Ovary (tissue), 10 donors: ENCODE measurements at regions of chr2 and their contacts with region 1.

Region 1: DNA sequence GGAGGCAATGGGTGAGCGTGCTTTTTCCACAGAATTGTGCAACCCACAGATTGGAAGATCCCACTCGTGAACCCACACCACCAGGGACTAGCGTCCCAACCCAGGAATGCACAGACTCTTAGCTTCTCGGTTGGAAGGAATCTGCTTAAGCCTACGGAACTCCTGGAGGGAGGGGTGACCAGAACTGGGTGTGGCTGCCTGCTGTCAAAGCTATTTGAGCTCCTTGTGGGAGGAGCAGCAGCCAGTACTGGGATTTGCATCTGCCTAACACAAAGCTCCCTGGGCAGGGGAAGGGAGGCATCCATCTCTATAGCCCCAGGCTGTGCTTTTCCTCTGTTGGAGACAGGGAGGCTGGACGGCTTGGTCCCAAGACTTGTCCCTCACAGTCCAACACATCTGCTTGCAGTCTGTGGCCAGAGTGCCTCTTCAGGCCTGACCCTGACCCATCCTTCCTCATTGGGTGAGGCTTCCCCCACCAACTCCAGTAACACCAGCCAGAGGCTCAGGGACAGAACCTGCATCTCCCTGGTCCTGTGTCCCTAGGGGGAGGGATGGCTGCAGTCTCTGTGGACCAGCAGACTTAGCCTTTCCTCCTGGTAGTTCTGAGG is 27.9 kb downstream of the HNMT start:
- DNase-seq: no peak
- H3K4me3 ChIP-seq: no peak overlapping the region
- H3K27ac ChIP-seq: no peak overlapping the region
- H3K4me1 ChIP-seq: no peaks in the 10 kb centered on the region
- H3K27me3 ChIP-seq: no peaks in the 10 kb centered on the region
- CTCF ChIP-seq: no peak
- EP300 ChIP-seq: no peak
- POLR2A ChIP-seq: no peak

Region 2: DNA sequence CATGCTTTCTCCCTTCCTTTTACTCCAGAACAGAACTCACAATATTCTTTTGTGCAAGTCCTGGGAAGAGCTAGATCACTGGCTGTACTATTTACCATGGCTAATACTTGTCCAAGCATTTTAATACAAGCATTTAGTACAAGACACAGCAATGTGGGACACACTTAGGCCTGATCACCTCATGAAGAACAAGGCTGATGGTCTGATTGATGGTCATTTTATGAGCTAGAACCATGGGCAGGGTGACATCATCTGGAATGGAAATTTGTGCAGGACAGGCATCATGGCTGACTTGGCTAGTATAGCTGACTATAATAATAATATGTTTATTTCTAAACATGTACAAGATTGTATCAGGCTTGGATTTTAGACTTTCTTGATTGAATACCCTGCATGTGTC is 402.0 kb before region 1 on chr2:
- intact Hi-C with region 1: no loop called
- DNase-seq: no peak
- H3K4me3 ChIP-seq: no peak overlapping the region
- H3K27ac ChIP-seq: no peak overlapping the region
- H3K4me1 ChIP-seq: no peaks in the 10 kb centered on the region
- H3K27me3 ChIP-seq: no peaks in the 10 kb centered on the region
- CTCF ChIP-seq: no peak
- EP300 ChIP-seq: no peak
- POLR2A ChIP-seq: no peak

Region 3: DNA sequence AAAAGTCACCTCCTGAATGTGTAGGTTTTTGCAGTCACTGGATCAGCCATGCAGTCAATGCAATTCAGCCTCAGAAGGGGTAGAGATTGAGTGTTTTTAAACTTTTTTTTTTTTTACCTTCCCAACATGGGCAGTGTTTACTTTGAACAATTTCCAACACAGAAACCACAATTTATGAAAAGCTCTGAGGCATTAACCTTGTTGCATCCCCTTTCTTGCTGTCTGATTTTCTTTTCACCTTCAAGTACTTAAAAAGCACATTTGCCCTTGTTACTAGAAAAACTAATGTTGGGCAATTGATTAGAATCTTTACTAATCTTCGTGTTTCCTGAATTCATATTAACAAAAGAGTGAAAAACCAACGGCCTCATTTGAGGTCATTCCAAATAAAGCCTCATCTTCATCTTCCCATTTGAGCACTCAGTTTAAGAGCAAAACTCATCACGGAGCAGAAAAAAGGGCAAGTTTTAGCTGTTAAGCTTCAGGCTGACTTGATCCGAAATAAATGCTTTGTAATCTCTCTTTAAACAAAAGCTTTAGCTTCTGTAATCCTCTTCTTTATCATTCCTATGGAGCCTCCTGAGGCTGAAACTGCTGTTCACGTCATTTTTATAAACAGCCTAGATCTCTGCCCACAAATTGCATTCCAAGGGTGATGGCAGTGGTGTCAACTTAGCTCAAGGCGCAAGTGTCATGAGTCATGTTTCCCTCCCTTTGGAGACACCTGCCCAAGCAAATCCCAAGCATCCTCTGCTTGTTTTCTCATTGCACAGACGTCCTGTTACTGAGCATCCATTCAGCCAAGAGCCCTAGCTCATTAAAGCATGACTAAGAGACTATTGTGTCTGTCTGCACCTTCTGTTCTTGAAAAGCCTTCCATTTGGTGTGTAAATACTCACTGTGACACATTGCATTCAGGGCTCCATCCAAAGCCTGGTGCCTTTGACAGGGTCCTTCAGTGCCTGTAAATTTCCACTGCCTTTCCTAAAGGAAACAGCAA is 79.9 kb after region 1 on chr2:
- intact Hi-C with region 1: loop called in 1 of 4 experiments (anchors 5 kb)
- DNase-seq: no peak
- H3K4me3 ChIP-seq: no peak overlapping the region
- H3K27ac ChIP-seq: no peak overlapping the region
- H3K4me1 ChIP-seq: no peaks in the 10 kb centered on the region
- H3K27me3 ChIP-seq: no peaks in the 10 kb centered on the region
- CTCF ChIP-seq: no peak
- EP300 ChIP-seq: no peak
- POLR2A ChIP-seq: no peak